ENCODE measurements at regions of chr1 and their contacts with region 1.

Region 1: DNA sequence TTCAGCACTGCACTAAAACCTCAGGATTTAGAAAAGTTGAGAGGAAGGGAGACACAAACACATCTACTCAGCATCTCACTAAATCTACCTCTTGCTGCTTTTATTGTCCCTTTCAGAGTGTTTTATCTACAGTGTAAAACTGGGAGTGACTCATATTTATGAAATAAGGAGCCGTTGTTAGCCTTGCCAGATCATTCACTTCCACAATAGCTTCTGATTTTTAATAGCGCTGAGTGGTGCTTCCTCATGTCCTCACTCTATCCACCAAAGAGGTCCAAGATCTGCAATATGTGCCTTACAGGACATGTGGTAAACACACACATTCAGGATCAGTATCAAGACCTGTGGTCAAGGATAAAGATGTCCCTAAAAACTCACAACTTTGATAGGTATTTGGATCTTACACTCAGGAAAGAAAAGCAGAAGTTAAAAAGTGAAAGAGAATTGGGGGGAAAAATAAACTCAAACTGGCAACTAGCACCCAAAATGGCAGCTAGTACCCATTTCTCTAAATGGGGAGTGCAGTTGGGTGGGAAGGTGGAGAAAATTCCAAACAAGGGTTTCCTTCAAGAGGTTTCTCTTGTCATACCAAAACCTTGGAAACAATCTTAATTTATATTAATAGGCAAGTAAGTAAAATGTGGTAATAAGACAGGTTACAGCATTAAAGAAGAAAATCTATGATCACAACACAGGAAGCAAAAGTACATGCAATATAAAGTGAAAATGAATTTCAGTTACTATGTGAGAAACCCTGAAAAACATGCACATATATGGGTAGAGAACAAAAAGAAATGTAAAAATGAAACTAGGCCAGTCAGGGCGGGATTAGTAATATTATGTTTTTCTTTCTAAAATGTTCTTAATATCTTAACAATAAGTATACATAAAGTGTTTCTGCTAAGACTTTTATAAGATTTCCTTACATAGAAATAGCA is 15.9 kb downstream of the DUSP10 start:
- DNase-seq: no peak
- H3K4me3 Mint-ChIP-seq: peak overlapping the region; percentile 8
- H3K27ac Mint-ChIP-seq: peak overlapping the region; percentile 88
- H3K4me1 Mint-ChIP-seq: peaks cover 67% of the 10 kb centered on the region
- H3K27me3 Mint-ChIP-seq: no peaks in the 10 kb centered on the region

Region 2: DNA sequence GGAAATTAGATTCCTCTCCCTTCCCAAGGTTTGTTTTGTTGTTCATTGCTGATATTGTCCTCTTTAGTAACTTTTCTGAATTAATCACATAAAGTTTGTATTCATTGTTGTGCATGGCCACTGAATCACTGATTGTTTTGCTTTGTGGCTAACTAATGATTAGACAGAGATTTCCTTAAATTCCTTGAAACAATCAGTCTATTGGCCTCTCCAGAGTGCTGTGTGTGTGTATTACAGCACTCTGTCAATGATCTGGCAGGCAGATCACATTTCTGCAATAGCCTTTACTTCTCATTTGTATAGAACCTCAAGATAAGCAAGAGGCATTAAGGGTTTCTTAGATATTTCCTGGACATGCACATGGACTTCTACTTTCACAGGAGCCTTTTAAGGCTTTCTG is 62.7 kb before region 1 on chr1:
- CTCF ChIA-PET with region 1: no interaction called
- POLR2A ChIA-PET with region 1: no interaction called
- DNase-seq: no peak
- H3K4me3 Mint-ChIP-seq: no peak overlapping the region
- H3K27ac Mint-ChIP-seq: no peak overlapping the region
- H3K4me1 Mint-ChIP-seq: peaks cover 2% of the 10 kb centered on the region
- H3K27me3 Mint-ChIP-seq: no peaks in the 10 kb centered on the region

Region 3: DNA sequence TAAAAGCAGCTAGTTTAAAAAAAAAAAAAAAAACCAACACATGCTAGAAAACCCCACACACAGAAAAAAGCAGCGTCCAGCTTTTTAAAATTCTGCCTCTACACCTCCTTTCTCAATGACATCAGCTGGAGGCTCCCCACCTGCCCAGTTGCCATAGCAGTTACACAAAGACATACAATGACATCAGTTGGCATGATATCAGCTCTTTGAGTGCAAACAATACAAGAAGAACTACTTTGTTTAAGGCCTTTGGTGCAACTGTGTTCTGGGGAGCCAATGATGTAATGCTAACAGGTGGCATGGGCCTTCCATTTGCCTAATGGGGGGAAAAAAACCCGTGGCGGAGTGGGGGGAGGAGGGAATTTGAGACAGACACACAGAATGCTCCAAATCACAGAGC is 17.0 kb before region 1 on chr1:
- CTCF ChIA-PET with region 1: interaction called, 22 read pairs
- POLR2A ChIA-PET with region 1: no interaction called
- DNase-seq: peak; percentile 35
- H3K4me3 Mint-ChIP-seq: no peak overlapping the region
- H3K27ac Mint-ChIP-seq: peak overlapping the region; percentile 71
- H3K4me1 Mint-ChIP-seq: peaks cover 72% of the 10 kb centered on the region
- H3K27me3 Mint-ChIP-seq: no peaks in the 10 kb centered on the region

Measured in activated CD4-positive, alpha-beta T cell treated with anti-CD3 and anti-CD28 coated beads, Interleukin-2, amount 10 ng/mL, durations not matched to agents 7 days and 5 days (primary cell).